Ascending aorta (tissue), 2 donors: ENCODE measurements at regions of chr10 and their contacts with region 1.

Region 1: DNA sequence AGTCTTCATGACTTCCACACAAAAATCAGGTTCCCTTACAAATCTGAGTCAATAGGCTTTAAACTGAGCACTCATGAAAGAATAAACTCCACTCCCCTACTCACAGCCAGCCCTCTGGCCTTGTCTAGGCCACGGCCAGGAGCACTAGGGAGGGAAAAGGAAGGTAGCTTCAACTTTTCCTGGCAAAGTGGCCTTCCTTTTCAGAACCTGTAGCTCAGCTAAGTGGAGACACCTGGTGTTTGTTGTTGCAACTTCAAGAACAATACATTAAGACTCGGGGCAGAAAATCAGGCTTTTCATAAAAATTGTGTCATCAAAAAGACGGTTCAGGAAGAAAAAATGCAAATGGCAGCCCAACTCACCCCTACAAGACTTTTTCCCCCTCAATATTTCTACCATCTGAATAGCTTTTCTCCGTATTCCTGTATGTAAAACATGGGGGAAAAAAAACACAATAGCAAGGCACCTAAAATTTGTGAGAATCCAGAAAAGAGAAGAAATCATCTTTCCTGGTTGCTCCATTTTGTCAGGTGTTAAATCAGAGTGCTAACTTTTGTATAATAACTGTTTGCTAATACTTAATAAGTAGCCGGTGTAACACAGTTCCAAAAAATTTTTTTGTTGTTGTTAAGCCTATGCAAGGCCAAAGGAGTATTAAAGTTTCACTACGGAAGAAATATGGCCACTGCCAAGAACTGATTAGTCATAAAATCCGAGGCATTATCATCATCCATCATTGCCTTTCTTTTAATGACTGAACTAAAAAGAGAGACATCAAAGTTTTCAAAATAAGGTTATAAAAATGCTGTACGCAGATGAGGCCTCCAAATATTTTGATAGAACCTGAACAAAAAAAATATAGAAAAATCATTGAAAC is 66.2 kb upstream of the ARID5B start:
- DNase-seq: no peak
- H3K4me3 ChIP-seq: no peak overlapping the region
- H3K27ac ChIP-seq: peak overlapping the region; percentile 45 to 71
- H3K4me1 ChIP-seq: peaks cover 3 to 19% of the 10 kb centered on the region in 2 donors
- H3K27me3 ChIP-seq: no peaks in the 10 kb centered on the region
- CTCF ChIP-seq: peak in 1 of 3 experiments; percentile 41

Region 2: DNA sequence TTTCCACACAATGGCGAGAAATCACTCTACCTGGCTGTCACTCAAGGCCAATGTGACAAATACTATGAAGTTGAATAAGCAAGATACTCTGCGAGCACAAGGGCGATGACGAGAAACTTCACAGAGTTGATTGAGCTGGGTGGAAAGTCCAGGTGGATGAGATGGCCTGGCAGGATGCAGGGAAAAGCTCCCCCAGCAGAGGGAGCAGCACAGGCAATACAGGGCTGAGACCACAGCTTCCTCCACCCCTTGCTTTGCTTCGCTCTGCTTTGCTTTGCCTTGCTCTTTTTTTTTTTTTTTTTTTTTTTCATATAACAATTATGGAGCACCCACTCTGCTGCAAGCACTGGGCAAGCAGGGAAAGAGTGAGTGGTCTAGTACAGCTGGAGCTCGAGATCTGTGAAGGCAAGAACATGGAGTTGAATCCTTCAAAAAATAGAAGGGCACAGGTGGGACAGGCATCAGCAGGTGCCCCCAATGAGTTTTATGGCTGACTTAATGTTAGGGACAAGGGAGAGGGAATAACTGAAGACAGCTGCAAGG is 84.3 kb before region 1 on chr10:
- intact Hi-C with region 1: loop called (anchors 5 kb)
- DNase-seq: peak in 1 of 2 donors; percentile 69
- H3K4me3 ChIP-seq: no peak overlapping the region
- H3K27ac ChIP-seq: peak overlapping the region; percentile 49 to 65
- H3K4me1 ChIP-seq: peaks cover 0 to 26% of the 10 kb centered on the region in 2 donors
- H3K27me3 ChIP-seq: no peaks in the 10 kb centered on the region
- CTCF ChIP-seq: peak in 2 of 3 experiments; percentile 42

Region 3: DNA sequence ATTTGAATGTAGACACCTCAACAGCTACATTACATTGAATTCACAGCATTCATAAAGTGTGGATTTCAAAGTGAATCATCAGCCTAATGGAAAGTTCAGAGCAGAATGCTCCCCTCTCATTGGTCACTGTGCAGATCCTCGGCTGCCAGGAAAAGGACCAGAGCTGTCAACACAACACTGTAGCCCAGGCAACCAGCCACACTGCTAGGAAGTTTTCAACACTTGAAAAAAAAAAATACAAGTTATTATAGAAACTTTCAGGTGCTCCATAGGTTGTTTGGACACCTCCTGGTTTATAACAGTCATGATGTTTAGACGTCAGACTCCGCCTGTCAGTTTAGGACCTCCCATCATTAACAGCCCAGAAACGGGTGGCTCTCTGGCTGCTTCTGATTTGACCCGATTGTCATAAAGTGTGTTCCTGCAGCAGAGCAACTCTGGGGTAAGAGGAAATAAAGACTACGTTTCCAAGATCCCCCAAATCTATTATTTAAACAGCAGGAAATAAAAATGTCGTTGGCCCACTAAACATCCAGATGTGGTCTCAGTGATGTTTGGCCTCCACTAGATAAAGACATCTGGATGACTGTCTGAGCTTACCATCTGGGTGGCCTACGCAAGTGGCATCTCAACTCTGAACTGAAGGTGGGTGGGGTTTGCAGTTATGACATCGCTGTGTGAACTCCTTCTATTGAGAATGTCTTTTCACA is 55.2 kb before region 1 on chr10:
- intact Hi-C with region 1: loop called (anchors 5 kb)
- DNase-seq: peak in 1 of 2 donors; percentile 83
- H3K4me3 ChIP-seq: no peak overlapping the region
- H3K27ac ChIP-seq: peak overlapping the region in 1 of 2 donors; percentile 46
- H3K4me1 ChIP-seq: peaks cover 2 to 3% of the 10 kb centered on the region in 2 donors
- H3K27me3 ChIP-seq: no peaks in the 10 kb centered on the region
- CTCF ChIP-seq: no peak

Region 4: DNA sequence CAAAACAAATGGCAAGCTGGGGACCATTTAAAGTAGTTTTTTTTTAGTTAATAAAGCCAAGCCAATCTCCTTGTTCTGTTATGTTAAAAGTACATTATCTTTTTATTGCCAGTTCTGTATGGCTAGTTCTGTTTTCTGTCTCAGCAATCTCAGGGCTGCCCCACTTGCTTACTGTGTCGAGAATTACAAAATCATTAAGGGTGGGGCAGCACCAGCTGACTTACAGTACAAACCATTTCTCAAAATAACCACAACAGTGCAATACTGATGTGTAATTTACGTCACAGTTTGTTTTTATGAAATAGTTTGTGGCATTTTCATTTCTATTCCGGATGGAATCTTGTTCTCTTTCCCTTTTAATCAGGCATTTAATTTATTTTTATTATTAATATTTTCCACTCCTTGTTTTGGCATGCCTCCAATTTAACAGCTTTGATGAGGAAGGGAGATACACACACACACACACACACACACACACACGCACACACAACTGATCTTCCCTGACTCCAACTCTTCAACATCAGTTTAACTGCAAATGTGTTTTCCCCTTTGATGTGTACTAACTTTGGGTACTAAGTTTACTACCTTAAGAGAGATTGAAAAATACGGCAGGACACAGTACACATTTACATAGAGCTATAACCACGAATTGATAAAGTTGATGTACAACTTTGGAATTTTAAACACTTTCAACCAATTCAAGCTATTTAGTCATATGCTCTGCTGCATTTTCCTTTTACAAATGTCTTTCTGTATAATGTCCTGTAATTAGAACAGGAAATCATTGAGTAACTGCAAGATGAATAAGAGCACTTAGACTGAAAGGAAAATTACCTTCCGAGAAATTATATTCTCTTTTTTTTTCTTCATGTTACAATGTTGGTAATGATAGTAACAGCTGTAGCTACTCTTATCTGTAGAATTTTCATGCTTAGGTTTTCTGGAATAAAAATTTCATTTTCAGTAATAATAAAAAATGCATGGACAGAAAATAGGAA is 157.7 kb after region 1 on chr10:
- intact Hi-C with region 1: loop called (anchors 10 kb)
- DNase-seq: peak; percentile 48 to 88
- H3K4me3 ChIP-seq: peak overlapping the region; percentile 34 to 40
- H3K27ac ChIP-seq: peak overlapping the region; percentile 73 to 87
- H3K4me1 ChIP-seq: peaks cover 3 to 54% of the 10 kb centered on the region in 2 donors
- H3K27me3 ChIP-seq: no peaks in the 10 kb centered on the region
- CTCF ChIP-seq: no peak

Region 5: GRCh38 chr10:62231371-62231770 is 396.1 kb after region 1 on chr10:
- intact Hi-C with region 1: loop called (anchors 5 kb)
- DNase-seq: no peak
- H3K4me3 ChIP-seq: no peak overlapping the region
- H3K27ac ChIP-seq: peak overlapping the region; percentile 28 to 48
- H3K4me1 ChIP-seq: peaks cover 0 to 30% of the 10 kb centered on the region in 2 donors
- H3K27me3 ChIP-seq: no peaks in the 10 kb centered on the region
- CTCF ChIP-seq: no peak

Region 6: DNA sequence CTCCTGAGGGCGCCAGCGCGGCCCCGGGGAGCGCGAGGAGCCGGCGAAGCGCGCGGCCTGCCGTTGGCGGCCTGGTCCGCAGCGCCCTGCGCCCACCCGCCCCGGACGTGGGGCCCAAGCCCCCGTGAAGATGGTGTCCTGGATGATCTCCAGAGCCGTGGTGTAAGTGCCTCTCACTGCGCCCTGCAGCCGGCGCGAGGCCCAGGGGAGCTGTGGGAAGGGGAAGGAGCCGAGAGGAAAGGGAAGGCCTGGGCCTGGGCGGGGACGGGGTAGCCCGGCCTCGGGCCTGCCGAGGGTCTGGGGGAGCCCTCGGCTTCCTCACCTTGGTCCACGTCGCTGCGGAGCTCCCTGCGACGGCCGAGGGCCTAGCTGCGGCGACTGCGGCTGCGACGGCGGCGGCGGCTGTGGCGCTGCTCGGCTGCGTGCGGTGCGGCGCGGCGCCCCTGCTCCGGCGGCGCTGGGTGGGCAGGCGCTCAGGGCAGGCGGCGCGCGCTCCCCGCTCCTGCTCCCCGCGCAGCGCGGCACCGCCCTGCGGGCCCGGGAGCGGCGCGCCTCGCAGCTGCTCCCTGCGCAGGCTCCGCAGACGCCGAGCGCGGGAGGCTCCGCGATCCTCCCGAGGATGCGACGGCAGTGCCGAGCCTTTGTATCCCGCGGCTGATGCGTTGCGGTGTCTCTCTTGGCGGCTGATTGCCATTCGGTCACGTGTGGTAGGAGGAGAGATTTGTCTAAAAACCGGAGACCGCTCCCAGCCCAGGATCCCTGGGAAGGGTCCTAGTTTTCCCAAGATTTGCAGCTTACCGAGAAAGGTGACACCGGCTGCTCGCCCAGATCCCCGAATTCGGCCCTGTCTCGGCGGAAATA is 1686.3 kb after region 1 on chr10:
- intact Hi-C with region 1: loop called (anchors 10 kb)
- DNase-seq: peak in 1 of 2 donors; percentile 76
- H3K4me3 ChIP-seq: peak overlapping the region; percentile 81 to 90
- H3K27ac ChIP-seq: peak overlapping the region; percentile 97
- H3K4me1 ChIP-seq: peaks cover 0 to 23% of the 10 kb centered on the region in 2 donors
- H3K27me3 ChIP-seq: no peaks in the 10 kb centered on the region
- CTCF ChIP-seq: no peak